ENCODE measurements at regions of chr14 and their contacts with region 1.

Region 1: GRCh38 chr14:67526676-67527459 is 6.2 kb upstream of the PLEKHH1 start:
- DNase-seq: peak; percentile 32
- ATAC-seq: peak; percentile 65 to 71

Region 2: GRCh38 chr14:67571272-67571850 is 44.5 kb after region 1 on chr14:
- intact Hi-C with region 1: loop called in 1 of 2 experiments (anchors 5 kb)
- DNase-seq: peak; percentile 74
- ATAC-seq: peak; percentile 76 to 85

Region 3: DNA sequence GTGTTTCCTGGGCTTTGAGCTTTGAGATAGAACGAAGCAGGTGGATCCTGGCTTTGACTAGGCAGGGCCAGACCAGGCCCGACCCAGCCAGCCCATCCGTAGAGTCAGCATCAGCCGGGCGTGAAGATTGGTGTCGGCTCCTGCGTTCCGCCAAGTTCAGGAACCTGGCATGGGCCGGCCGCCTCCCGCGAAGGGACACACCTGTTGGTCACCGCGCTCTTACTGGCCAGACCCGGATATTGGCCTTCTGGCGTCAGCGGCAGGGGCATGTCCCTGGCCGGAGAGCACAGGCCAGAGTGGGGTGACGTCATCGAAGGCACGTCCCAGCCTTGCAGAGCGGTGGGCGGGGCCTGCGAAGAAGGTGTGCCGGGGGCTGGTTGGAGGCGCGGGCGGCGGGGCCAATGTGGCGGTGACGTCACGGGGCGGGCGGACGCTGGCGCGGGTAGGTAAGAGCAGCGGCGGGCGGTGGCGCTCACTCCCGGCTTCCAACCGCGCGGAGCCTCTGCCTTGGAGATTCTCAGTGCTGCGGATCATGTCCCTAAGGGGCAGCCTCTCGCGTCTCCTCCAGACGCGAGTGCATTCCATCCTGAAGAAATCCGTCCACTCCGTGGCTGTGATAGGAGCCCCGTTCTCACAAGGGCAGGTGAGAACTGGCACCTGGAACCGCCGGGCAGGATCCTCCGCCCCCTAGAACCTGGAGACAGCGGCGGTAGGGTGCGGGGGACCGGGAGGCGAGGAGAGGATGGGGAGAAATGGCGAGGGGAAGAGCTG is 92.8 kb after region 1 on chr14 and contains the start of gene ARG2:
- intact Hi-C with region 1: no loop called
- DNase-seq: peak; percentile 98
- ATAC-seq: peak; percentile 98 to 99
- total RNA-seq, gene ARG2: 0.38 to 1.2 TPM

Region 4: GRCh38 chr14:67666750-67667449 is 140.0 kb after region 1 on chr14:
- intact Hi-C with region 1: loop called in 1 of 2 experiments (anchors 10 kb)
- DNase-seq: no peak
- ATAC-seq: peak; percentile 81 to 82

Measured in left cardiac atrium (tissue), 4 donors.